ENCODE measurements at regions of chr5 and their contacts with region 1.

Region 1: DNA sequence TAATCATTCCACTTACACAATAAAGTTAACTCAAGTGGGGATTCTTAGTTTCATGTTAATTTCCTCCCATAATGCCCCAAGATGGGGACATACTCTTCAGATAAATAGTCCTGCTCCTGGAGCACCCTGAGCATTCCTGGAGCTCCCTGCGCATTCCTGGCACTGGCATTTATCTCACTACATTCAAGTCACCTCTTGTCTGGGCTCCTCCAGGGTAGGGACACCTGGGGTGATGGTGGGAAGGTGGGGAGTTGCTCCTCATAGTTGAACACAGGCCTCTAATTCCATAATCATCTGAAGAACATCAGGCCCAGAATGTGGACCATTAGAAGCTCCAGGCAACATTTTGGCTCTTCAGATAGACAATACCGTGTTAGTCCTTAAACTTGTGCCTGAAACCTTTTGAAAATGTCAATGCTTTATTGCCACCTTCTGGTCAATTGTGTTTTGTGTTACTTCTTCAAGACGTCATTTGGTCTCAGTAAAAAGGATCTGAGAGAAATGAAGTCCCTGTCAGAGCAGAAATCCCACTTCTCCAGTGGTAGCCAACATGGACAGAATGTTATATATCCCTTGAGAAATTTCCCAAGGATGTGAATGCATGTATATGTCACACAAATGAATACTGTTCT is 14.2 kb upstream of the AGGF1 start:
- DNase-seq: peak; percentile 31

Region 2: DNA sequence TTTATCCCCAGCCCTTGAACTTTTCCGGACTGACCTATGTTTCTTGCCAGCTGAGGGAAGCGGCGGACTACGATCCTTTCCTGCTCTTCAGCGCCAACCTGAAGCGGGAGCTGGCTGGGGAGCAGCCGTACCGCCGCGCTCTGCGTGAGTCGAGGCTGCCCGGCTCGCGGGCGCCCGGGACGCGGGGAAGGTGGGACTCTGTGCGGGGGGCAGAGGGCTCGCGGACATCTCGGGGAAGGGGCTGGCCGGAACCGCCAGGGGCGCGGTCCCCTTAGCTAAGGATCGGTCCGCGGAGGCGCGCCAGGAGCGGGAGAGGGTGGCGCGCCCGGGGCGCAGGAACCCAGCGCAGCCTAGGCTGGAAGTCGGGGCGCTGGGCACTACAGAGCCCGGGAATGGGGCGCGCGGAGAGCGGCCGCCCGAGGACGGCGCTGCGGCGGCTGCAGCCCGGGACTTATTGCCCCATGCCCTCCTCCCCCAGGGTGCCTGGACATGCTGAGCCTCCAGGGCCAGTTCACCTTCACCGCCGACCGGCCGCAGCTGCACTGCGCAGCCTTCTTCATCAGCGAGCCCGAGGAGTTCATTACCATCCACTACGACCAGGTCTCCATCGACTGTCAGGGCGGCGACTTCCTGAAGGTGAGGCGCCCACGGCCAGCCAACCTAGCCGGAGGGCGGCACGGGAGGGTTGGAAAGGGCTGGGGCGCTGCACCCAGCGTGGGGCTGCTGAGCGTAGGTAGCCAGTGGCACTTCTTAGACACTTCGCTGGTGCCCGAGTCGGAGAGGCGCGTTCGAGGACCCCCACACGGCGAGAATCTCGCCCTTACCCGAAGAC is 62.3 kb before region 1 on chr5:
- CTCF ChIA-PET with region 1: no interaction called
- POLR2A ChIA-PET with region 1: no interaction called
- DNase-seq: no peak

Region 3: GRCh38 chr5:77030097-77031071 is 14.3 kb after region 1 on chr5 and contains the start of gene AGGF1:
- CTCF ChIA-PET with region 1: interaction called, 3 read pairs
- POLR2A ChIA-PET with region 1: interaction called, 13 read pairs
- DNase-seq: peak; percentile 87